CD4-positive, alpha-beta memory T cell (primary cell): ENCODE measurements at regions of chr2 and their contacts with region 1.

Region 1: DNA sequence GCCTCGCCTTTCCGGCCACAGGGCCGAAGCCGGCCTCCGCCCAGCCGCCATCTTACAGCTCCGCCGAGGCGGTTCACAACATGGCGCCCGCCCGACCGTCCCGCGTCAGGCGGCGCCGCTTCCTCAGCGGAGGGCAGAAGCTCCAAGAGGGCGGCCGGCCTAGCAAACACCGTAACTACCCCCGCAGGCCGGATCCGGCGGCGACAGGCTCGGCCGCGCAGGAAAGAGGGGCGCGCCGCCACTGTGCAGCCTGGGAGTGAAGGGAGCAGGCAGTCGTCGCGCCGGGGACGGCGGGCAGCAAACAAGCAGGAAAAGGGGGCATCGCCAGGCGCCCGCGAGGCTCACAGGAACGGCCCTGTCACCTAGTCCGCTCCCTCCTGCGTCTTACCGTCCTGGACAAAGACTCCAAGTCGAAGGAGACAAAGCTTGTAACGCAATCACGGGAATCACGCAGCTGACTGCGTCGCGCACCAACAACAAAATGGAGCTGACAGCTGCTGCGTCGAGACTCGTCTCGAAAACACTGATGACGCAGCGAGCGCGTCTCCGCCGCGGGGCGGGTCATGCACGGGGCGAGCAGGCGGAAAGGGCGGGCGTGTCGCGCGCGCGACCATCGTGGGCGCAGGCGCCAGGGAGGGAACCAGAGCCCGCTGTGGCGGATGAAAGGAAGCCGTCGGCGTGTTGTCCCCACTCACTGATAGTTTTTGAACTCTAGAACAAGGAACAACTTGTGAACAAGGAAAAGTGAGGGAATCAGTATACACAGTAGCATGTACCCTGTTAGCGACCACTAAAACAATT is at the start of gene CLK1:
- DNase-seq: peak; percentile 93 to 97 (median 94)
- H3K4me3 ChIP-seq: peak within 1 kb of the TSS; percentile 83 to 100
- H3K4me3 Mint-ChIP-seq: peak within 1 kb of the TSS; percentile 91 to 99 (median 96)
- H3K27ac ChIP-seq: peak within 1 kb of the TSS; percentile 100
- H3K27ac Mint-ChIP-seq: peak within 1 kb of the TSS; percentile 89 to 100 (median 100)
- H3K4me1 ChIP-seq: peaks cover 47% of the 10 kb centered on the region
- H3K4me1 Mint-ChIP-seq: peaks cover 28 to 59% (median 41%) of the 10 kb centered on the region in 4 donors
- H3K27me3 ChIP-seq: no peaks in the 10 kb centered on the region
- H3K27me3 Mint-ChIP-seq: no peaks in the 10 kb centered on the region
- total RNA-seq, gene CLK1: 472 to 499 TPM

Region 2: GRCh38 chr2:200811336-200812121 is 52.8 kb before region 1 on chr2 and contains the start of gene BZW1:
- CTCF ChIA-PET with region 1: interaction called, 7 read pairs
- POLR2A ChIA-PET with region 1: interaction called, 75 read pairs
- intact Hi-C with region 1: loop called (anchors 1 kb)
- DNase-seq: peak; percentile 97 to 98 (median 98)
- H3K4me3 ChIP-seq: peak within 1 kb of the TSS; percentile 58 to 67
- H3K4me3 Mint-ChIP-seq: peak within 1 kb of the TSS; percentile 95 to 100 (median 98)
- H3K27ac ChIP-seq: peak within 1 kb of the TSS; percentile 97
- H3K27ac Mint-ChIP-seq: peak within 1 kb of the TSS; percentile 96 to 99 (median 98)
- H3K4me1 ChIP-seq: peaks cover 41% of the 10 kb centered on the region
- H3K4me1 Mint-ChIP-seq: peaks cover 35 to 62% (median 43%) of the 10 kb centered on the region in 4 donors
- H3K27me3 ChIP-seq: no peaks in the 10 kb centered on the region
- H3K27me3 Mint-ChIP-seq: no peaks in the 10 kb centered on the region
- total RNA-seq, gene BZW1: 126 to 133 TPM

Region 3: GRCh38 chr2:200888704-200889625 is 24.6 kb after region 1 on chr2 and contains the starts of genes NIF3L1 and PPIL3:
- CTCF ChIA-PET with region 1: interaction called, 3 read pairs
- POLR2A ChIA-PET with region 1: interaction called, 285 read pairs
- intact Hi-C with region 1: loop called (anchors 1 kb)
- DNase-seq: peak; percentile 96 to 98 (median 96)
- H3K4me3 ChIP-seq: peak within 1 kb of the TSS; percentile 91 to 92
- H3K4me3 Mint-ChIP-seq: peak within 1 kb of the TSS; percentile 90 to 98 (median 96)
- H3K27ac ChIP-seq: peak within 1 kb of the TSS; percentile 85
- H3K27ac Mint-ChIP-seq: peak within 1 kb of the TSS; percentile 98 to 100 (median 99)
- H3K4me1 ChIP-seq: peaks cover 31% of the 10 kb centered on the region
- H3K4me1 Mint-ChIP-seq: peaks cover 30 to 57% (median 45%) of the 10 kb centered on the region in 4 donors
- H3K27me3 ChIP-seq: no peaks in the 10 kb centered on the region
- H3K27me3 Mint-ChIP-seq: no peaks in the 10 kb centered on the region
- total RNA-seq, gene NIF3L1: 30.0 to 30.3 TPM
- total RNA-seq, gene PPIL3: 48.0 to 57.7 TPM

Region 4: GRCh38 chr2:201021914-201022313 is 157.5 kb after region 1 on chr2:
- CTCF ChIA-PET with region 1: no interaction called
- POLR2A ChIA-PET with region 1: no interaction called
- intact Hi-C with region 1: no loop called
- DNase-seq: no peak
- H3K4me3 ChIP-seq: no peak overlapping the region
- H3K4me3 Mint-ChIP-seq: no peak overlapping the region
- H3K27ac ChIP-seq: peak overlapping the region; percentile 9
- H3K27ac Mint-ChIP-seq: peak overlapping the region in 3 of 7 donors; percentile 3 to 70 (median 13)
- H3K4me1 ChIP-seq: no peaks in the 10 kb centered on the region
- H3K4me1 Mint-ChIP-seq: peaks cover 19 to 31% (median 22%) of the 10 kb centered on the region in 4 donors
- H3K27me3 ChIP-seq: no peaks in the 10 kb centered on the region
- H3K27me3 Mint-ChIP-seq: no peaks in the 10 kb centered on the region

Region 5: DNA sequence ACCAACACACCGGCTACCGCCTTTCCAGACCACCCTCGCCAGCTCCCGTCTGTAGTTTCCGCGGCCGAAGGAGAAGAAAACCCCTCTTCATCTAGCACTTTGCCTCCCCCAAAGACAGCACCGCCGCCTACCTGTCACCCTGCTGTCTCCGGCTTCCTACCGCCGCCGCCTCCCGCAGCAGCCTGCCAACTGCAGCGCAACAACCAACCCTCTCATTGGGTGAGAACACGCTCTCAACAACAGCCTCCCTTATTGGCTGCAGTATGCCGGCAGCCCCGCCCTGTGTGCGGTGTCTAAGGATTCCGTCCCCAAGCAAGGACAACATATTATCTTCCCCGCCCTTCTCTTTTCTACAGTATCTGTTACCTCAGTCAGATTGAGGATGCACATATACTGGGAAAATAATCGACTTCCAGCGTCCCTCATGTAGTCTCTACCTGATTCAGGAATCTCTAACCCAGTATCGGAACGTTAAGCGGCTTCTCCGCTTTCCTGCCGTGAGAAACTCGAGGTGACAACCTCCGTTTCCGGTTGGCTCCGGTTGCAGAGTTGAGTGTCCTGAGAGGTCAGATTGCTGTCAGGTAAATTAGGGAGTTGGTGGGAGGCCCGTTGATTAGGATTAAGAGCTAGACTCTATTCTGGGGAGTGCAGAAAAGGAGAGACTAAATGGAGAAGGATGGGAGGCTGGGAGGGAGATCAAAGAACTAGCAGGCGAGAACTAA is 207.3 kb after region 1 on chr2 and contains the starts of genes HYCC2 and NDUFB3:
- CTCF ChIA-PET with region 1: interaction called, 8 read pairs
- POLR2A ChIA-PET with region 1: interaction called, 18 read pairs
- intact Hi-C with region 1: loop called (anchors 1 kb)
- DNase-seq: peak; percentile 95 to 96 (median 95)
- H3K4me3 ChIP-seq: peak within 1 kb of the TSS; percentile 94 to 96
- H3K4me3 Mint-ChIP-seq: peak within 1 kb of the TSS; percentile 91 to 100 (median 98)
- H3K27ac ChIP-seq: peak within 1 kb of the TSS; percentile 79
- H3K27ac Mint-ChIP-seq: peak within 1 kb of the TSS; percentile 94 to 99 (median 98)
- H3K4me1 ChIP-seq: peaks cover 52% of the 10 kb centered on the region
- H3K4me1 Mint-ChIP-seq: peaks cover 35 to 62% (median 46%) of the 10 kb centered on the region in 4 donors
- H3K27me3 ChIP-seq: no peaks in the 10 kb centered on the region
- H3K27me3 Mint-ChIP-seq: peaks cover 0 to 2% of the 10 kb centered on the region in 2 donors
- total RNA-seq, gene HYCC2: 33.1 to 36.4 TPM
- total RNA-seq, gene NDUFB3: 48.7 to 53.6 TPM

Region 6: DNA sequence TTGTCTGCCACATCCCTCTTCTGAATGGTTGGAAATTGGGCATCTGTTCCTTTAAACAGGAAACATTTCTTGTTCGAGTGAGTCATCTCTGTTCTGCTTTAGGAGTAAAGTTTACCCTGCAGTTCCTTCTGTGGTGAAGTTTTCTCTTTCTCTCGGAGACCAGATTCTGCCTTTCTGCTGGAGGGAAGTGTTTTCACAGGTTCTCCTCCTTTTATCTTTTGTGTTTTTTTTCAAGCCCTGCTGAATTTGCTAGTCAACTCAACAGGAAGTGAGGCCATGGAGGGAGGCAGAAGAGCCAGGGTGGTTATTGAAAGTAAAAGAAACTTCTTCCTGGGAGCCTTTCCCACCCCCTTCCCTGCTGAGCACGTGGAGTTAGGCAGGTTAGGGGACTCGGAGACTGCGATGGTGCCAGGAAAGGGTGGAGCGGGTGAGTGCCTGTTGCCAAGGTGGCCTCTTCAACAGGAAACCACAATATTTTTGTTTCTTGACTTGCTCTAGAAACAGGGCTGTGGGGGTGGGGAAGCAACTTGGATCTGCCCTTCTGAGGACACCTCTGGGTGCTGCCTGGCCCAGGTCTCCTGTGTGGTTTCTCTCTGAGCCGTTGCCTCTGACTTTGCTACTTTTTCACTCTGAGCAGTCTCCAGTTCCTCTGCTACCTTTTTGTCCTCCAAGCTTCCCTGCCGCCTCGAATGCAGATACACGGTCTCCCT is 393.7 kb after region 1 on chr2:
- CTCF ChIA-PET with region 1: no interaction called
- POLR2A ChIA-PET with region 1: interaction called, 24 read pairs
- intact Hi-C with region 1: no loop called
- DNase-seq: peak; percentile 95 to 99 (median 98)
- H3K4me3 ChIP-seq: peak overlapping the region; percentile 57 to 58
- H3K4me3 Mint-ChIP-seq: peak overlapping the region; percentile 89 to 93 (median 92)
- H3K27ac ChIP-seq: peak overlapping the region; percentile 86
- H3K27ac Mint-ChIP-seq: peak overlapping the region; percentile 95 to 100 (median 99)
- H3K4me1 ChIP-seq: peaks cover 79% of the 10 kb centered on the region
- H3K4me1 Mint-ChIP-seq: peaks cover 40 to 81% (median 61%) of the 10 kb centered on the region in 4 donors
- H3K27me3 ChIP-seq: no peaks in the 10 kb centered on the region
- H3K27me3 Mint-ChIP-seq: no peaks in the 10 kb centered on the region